Activated CD4-positive, alpha-beta T cell treated with anti-CD3 and anti-CD28 coated beads, Interleukin-2, amount 10 ng/mL, durations not matched to agents 24 days and 14 days (primary cell): ENCODE measurements at regions of chr5 and their contacts with region 1.

Region 1: DNA sequence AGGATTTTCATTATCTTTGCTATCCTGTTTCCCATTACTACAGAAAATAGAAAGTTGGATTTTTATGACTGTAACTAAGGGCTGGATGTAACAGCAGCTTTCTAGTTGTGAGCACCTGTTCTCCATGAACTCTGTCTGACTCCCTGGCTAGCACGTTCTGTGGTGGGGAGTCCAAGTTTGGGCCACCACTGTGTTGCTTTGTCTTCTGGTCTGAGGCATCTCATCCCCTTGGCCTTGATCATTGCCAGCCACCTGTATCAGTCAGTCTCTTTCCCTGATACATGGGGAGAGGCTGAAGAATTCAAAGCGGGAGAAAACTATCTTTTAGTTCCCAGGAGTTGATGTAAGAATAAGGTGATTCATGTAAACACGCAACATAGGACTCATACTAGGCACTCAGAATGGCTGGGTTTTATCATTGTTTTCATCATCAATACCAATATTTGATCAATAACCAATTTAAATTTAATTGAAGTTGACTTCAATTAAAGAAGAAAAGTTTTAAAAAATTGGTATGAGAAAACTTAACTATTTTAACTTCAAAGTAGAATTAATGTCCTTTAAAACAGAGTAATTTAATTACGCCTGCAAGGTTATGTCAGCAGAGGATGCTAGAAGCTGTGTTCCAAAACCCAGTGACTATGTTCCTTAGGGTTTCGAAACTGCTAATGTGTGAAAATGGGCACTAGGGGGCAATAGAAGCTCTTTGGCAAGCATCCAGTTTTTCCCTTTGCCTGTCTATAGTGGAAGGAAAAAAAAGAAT is 33.6 kb downstream of the WDR70 start:
- DNase-seq: peak; percentile 80
- H3K4me3 Mint-ChIP-seq: no peak overlapping the region
- H3K27ac Mint-ChIP-seq: no peak overlapping the region
- H3K4me1 Mint-ChIP-seq: no peaks in the 10 kb centered on the region
- H3K27me3 Mint-ChIP-seq: no peaks in the 10 kb centered on the region

Region 2: GRCh38 chr5:35999547-35999946 is 1413.1 kb before region 1 on chr5:
- intact Hi-C with region 1: no loop called
- DNase-seq: no peak
- H3K4me3 Mint-ChIP-seq: no peak overlapping the region
- H3K27ac Mint-ChIP-seq: no peak overlapping the region
- H3K4me1 Mint-ChIP-seq: no peaks in the 10 kb centered on the region
- H3K27me3 Mint-ChIP-seq: peaks cover 7% of the 10 kb centered on the region

Region 3: DNA sequence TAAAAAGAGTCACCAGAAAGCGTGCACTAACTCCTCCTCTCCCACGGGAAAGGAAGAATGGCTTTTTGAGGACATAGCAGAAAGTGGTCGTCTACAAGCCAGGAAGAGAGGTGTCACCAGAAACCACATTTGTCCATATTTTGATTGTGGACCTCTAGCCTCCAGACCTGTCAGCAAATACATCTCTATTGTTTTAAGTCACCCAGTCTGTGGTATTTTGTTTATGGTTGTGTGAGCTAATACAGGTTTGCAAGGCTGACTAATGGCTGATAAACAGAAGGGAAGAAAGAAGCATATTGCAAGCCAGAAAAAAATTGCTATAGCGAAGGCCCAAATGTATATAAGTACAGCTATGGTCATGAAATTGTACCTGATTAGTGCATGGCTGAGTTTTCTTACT is 12.2 kb before region 1 on chr5:
- intact Hi-C with region 1: no loop called
- DNase-seq: no peak
- H3K4me3 Mint-ChIP-seq: no peak overlapping the region
- H3K27ac Mint-ChIP-seq: no peak overlapping the region
- H3K4me1 Mint-ChIP-seq: no peaks in the 10 kb centered on the region
- H3K27me3 Mint-ChIP-seq: no peaks in the 10 kb centered on the region

Region 4: GRCh38 chr5:37554938-37555337 is 142.2 kb after region 1 on chr5:
- intact Hi-C with region 1: loop called (anchors 1 kb)
- DNase-seq: no peak
- H3K4me3 Mint-ChIP-seq: no peak overlapping the region
- H3K27ac Mint-ChIP-seq: no peak overlapping the region
- H3K4me1 Mint-ChIP-seq: peaks cover 4% of the 10 kb centered on the region
- H3K27me3 Mint-ChIP-seq: no peaks in the 10 kb centered on the region

Region 5: DNA sequence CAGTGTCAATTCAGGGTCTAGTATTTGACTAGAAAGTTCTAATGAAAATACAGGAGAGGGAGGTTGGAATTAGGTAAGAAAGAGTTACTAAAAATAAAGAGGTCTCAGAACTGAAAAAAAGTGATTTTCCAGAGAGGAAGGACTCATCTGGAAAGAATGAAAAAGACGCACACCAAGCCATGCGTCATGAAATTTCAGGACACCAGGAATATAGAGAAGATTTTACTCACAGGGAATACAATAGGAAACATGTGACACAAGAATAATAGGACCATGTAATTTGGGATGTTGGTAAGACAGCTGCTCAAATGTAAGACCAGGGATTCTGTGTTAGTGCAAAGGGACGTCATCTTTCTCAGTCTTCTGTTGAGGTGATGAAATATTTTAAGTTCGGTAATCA is 202.5 kb after region 1 on chr5:
- intact Hi-C with region 1: no loop called
- DNase-seq: no peak
- H3K4me3 Mint-ChIP-seq: no peak overlapping the region
- H3K27ac Mint-ChIP-seq: no peak overlapping the region
- H3K4me1 Mint-ChIP-seq: no peaks in the 10 kb centered on the region
- H3K27me3 Mint-ChIP-seq: no peaks in the 10 kb centered on the region

Region 6: DNA sequence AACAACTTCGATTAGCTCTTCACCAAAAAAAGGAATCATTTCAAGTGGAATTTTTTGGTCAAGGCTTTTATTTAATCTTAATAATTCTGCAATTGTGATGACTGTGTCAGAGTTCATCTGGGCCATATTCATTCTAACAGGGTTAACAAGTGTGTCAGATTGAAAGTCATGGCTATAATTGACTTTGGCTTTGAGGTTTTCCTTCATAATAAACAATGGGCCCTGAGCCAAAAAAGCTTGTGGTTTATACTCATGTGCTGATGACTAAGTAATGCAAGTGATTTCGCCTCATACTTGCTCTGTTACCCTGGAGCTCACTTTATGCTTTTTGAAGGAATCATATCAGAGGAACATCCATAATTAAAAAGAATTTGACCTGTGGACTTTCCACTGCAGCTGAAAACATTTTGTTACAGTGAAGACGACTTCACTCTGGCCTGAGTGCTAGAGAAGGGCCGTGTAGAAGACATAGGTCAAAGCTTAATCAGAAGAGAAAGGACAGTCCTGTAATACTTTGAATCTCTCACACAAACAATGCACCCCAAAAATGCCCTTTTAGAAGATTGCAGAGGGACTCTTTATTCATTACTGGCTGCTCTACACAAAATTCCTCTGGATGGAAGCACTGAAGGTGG is 325.5 kb after region 1 on chr5:
- intact Hi-C with region 1: loop called (anchors 5 kb)
- DNase-seq: peak; percentile 75
- H3K4me3 Mint-ChIP-seq: peak overlapping the region; percentile 62
- H3K27ac Mint-ChIP-seq: peak overlapping the region; percentile 85
- H3K4me1 Mint-ChIP-seq: peaks cover 26% of the 10 kb centered on the region
- H3K27me3 Mint-ChIP-seq: no peaks in the 10 kb centered on the region

Region 7: GRCh38 chr5:37837414-37838032 is 424.8 kb after region 1 on chr5:
- intact Hi-C with region 1: loop called (anchors 1 kb)
- DNase-seq: peak; percentile 89
- H3K4me3 Mint-ChIP-seq: peak overlapping the region; percentile 78
- H3K27ac Mint-ChIP-seq: peak overlapping the region; percentile 60
- H3K4me1 Mint-ChIP-seq: peaks cover 22% of the 10 kb centered on the region
- H3K27me3 Mint-ChIP-seq: peaks cover 82% of the 10 kb centered on the region

Region 8: DNA sequence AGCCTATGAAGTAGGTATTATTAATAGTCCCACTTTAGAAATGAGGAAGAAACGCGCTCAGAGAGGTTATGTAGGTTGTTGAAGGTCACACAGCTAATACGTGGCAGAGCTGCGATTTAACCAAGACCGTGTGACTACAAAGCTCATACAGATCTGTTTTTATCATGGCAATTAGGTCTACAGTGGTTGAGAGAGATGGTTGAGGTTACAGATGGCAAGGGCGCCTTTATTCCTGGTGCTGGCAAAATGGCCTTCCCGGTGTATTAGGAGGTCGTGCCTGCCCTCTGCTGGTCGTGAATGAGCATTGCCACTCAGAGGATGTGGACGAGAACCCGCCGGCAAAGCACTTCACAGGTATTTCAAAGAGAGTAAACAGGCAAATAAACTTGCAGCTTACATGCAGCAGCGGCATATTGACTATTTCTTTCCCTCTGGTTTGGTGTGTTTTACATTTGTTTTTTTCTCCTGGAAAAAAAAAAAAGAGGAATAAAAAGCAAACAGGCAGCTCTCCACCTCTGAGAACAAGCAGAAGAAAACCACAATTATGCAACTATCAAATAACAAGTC is 780.4 kb after region 1 on chr5:
- intact Hi-C with region 1: loop called (anchors 1 kb)
- DNase-seq: peak; percentile 86
- H3K4me3 Mint-ChIP-seq: no peak overlapping the region
- H3K27ac Mint-ChIP-seq: no peak overlapping the region
- H3K4me1 Mint-ChIP-seq: no peaks in the 10 kb centered on the region
- H3K27me3 Mint-ChIP-seq: peaks cover 25% of the 10 kb centered on the region